Aorta (tissue), 5 donors: ENCODE measurements at regions of chr19 and their contacts with region 1.

Region 1: GRCh38 chr19:55258828-55259539 is at the start of gene PPP6R1:
- DNase-seq: peak; percentile 98
- ATAC-seq: peak; percentile 97
- H3K4me3 ChIP-seq: peak within 1 kb of the TSS; percentile 88 to 94
- H3K27ac ChIP-seq: peak within 1 kb of the TSS; percentile 50
- H3K4me1 ChIP-seq: no peaks in the 10 kb centered on the region
- H3K27me3 ChIP-seq: no peaks in the 10 kb centered on the region
- total RNA-seq, gene PPP6R1: 47.9 to 55.4 TPM

Region 2: GRCh38 chr19:55279770-55280643 is 21.0 kb after region 1 on chr19 and contains the start of gene HSPBP1:
- intact Hi-C with region 1: loop called (anchors 1 to 2 kb)
- DNase-seq: peak; percentile 94 to 96
- ATAC-seq: peak; percentile 93
- H3K4me3 ChIP-seq: peak within 1 kb of the TSS; percentile 5 to 53
- H3K27ac ChIP-seq: peak within 1 kb of the TSS in 1 of 2 donors; percentile 30
- H3K4me1 ChIP-seq: no peaks in the 10 kb centered on the region
- H3K27me3 ChIP-seq: no peaks in the 10 kb centered on the region
- total RNA-seq, gene HSPBP1: 14.1 to 16.3 TPM

Region 3: DNA sequence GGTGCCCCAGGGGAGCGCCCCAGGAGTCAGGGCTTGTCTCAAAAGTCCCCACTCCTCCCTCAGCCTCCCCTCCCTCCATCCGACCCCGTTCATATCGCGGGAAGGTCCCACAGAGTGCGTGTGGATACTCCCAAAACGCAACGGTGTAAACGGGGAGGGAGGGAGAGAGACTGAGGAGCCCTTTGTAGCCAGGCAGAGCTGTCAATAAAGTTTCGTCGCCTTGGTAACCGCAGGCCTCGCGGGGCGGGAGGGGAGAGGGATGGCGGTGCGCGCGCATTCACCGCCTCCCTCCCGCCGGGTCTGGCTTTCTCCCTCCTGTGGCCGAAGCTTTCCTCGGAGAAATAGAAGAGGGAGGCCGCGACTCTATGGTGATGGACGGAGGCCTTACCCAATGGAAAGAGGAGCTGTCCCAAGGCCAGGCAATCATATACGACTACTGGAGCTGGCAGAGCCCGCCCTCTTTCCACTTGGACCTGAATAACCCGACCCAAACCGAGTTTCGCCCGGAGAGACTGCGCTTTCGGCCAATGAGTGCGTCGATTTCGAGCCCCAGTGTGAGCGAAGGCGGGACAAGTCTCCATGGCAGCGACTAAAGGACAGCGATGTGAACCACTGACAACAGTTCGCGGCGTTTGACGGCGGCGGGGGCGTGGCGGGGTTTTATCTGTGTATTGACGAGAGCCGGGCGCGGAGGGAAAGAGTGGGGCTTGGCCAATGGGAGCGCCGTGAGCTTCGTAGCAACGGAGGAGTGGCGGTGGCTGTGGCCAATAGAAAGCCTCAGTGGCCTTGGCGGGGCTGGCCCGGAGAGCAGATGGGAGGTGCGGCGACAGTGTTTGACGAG is 80.3 kb after region 1 on chr19 and contains the start of gene KMT5C:
- intact Hi-C with region 1: loop called in 1 of 2 experiments (anchors 1 kb)
- DNase-seq: peak; percentile 100
- ATAC-seq: peak; percentile 97
- H3K4me3 ChIP-seq: peak within 1 kb of the TSS; percentile 48 to 56
- H3K27ac ChIP-seq: peak within 1 kb of the TSS in 1 of 2 donors; percentile 39
- H3K4me1 ChIP-seq: no peaks in the 10 kb centered on the region
- H3K27me3 ChIP-seq: no peaks in the 10 kb centered on the region
- total RNA-seq, gene KMT5C: 4.5 to 12.8 TPM